CD8-positive, alpha-beta T cell (primary cell): ENCODE measurements at regions of chr14 and their contacts with region 1.

Region 1: GRCh38 chr14:67695394-67695949 is at the start of gene RDH11:
- DNase-seq: peak; percentile 51 to 93 (median 82)
- ATAC-seq: peak; percentile 95
- H3K4me3 ChIP-seq: peak within 1 kb of the TSS; percentile 78 to 86
- H3K4me3 Mint-ChIP-seq: peak within 1 kb of the TSS; percentile 88
- H3K27ac ChIP-seq: peak within 1 kb of the TSS; percentile 52 to 87
- H3K27ac Mint-ChIP-seq: peak within 1 kb of the TSS; percentile 92
- H3K4me1 ChIP-seq: peaks cover 11% of the 10 kb centered on the region
- H3K4me1 Mint-ChIP-seq: peaks cover 23% of the 10 kb centered on the region
- H3K27me3 ChIP-seq: no peaks in the 10 kb centered on the region
- H3K27me3 Mint-ChIP-seq: no peaks in the 10 kb centered on the region
- CTCF ChIP-seq: no peak
- total RNA-seq, gene RDH11: 13.9 to 14.5 TPM

Region 2: DNA sequence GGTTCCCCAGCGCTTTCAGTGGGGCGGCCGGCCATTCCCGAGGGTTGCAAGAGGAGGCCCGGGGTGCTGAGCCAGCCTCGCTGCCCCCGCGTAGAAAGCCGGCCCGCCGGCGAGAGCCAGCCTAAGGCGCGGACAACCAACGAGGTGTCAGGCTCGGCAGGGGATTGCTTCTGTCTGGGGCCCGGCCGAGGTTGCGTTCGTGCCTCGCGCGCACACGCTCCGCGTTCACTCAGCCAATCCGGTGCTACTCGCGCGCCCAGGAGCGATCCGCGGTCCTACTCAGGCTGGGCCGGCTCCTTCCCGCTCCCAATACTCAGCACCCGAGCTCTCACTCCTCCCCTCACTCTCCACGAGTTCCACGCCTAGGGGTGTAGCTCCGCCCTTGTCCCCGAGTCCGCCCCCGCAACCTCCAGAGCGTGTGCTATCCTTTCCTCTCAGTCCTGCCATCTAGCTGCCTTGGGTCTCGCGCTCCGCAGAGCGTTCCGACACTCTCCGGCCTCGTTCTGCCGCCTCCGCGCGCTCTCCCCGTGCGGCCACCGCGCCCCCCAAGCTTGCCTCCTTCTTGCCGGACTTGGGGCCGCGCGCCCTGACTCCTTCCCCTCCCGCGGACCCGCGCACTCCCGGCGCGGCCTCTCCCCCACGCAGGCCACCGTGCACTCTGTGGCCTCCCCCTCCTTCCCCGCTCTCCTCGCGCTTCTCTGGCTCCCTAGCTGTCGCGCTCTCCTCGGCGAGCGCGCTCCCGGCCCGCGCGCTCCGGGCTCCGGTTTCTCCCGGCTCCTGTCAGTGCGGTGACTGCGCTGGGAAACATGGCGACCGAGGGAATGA is 1187.5 kb before region 1 on chr14 and contains the start of gene GPHN:
- CTCF ChIA-PET with region 1: no interaction called
- POLR2A ChIA-PET with region 1: no interaction called
- intact Hi-C with region 1: loop called in 1 of 2 experiments (anchors 5 kb)
- DNase-seq: peak; percentile 53 to 91 (median 82)
- ATAC-seq: peak; percentile 90
- H3K4me3 ChIP-seq: peak within 1 kb of the TSS; percentile 75 to 81
- H3K4me3 Mint-ChIP-seq: peak within 1 kb of the TSS; percentile 99
- H3K27ac ChIP-seq: peak within 1 kb of the TSS; percentile 55 to 67
- H3K27ac Mint-ChIP-seq: peak within 1 kb of the TSS; percentile 91
- H3K4me1 ChIP-seq: no peaks in the 10 kb centered on the region
- H3K4me1 Mint-ChIP-seq: peaks cover 35% of the 10 kb centered on the region
- H3K27me3 ChIP-seq: no peaks in the 10 kb centered on the region
- H3K27me3 Mint-ChIP-seq: no peaks in the 10 kb centered on the region
- CTCF ChIP-seq: no peak
- total RNA-seq, gene GPHN: 8.2 to 9.3 TPM

Region 3: DNA sequence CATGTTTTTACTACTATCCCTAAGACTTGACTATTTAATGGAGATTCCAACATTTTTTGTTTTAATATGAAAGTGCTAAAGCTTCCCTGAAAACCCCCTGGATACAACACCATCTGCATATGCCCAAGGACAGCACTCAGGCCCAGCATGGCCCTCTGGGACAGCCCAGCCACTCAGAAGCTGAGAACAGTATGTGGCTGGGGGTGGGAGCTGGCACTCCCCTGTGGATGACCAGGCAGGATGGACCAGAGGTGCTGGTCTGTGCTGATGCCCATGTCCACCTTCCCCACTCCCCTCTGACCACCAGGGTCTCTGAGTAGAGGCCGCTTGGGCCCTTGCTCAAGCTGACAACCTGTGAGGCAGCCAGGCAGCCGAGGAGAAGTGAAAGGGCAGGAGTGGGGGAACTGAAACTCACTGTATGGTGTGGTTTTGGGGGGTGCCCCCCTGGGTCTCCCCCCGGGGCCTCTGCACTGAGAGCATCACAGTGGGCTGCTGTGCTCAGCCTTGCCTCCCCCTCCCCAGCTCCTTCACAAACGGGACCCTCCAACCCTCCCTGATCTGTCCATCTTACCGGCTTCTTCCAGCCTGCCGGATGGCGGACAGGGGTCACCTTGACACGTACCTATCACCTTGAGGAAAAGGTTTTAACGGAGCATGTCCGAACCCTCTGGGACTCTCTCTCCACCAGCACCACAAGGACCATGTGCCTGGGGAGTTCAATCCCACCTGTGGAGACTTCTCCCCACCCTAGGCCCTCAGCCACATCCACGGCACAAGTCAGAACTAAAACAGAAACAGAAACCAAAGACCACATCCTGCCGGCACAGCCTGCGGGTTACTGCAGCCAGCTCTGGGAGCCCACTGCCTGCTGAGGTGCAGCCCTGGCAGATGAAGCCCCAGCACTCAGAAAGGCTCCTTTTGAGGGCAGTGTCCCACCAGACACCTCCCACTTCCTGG is 207.3 kb before region 1 on chr14 and contains the start of gene TMEM229B:
- CTCF ChIA-PET with region 1: no interaction called
- POLR2A ChIA-PET with region 1: no interaction called
- intact Hi-C with region 1: loop called in 1 of 2 experiments (anchors 5 kb)
- DNase-seq: peak; percentile 43 to 90 (median 77)
- ATAC-seq: peak; percentile 96
- H3K4me3 ChIP-seq: peak within 1 kb of the TSS; percentile 68 to 84
- H3K4me3 Mint-ChIP-seq: peak within 1 kb of the TSS; percentile 99
- H3K27ac ChIP-seq: peak within 1 kb of the TSS; percentile 92 to 93
- H3K27ac Mint-ChIP-seq: peak within 1 kb of the TSS; percentile 100
- H3K4me1 ChIP-seq: peaks cover 51% of the 10 kb centered on the region
- H3K4me1 Mint-ChIP-seq: peaks cover 79% of the 10 kb centered on the region
- H3K27me3 ChIP-seq: no peaks in the 10 kb centered on the region
- H3K27me3 Mint-ChIP-seq: no peaks in the 10 kb centered on the region
- CTCF ChIP-seq: no peak
- total RNA-seq, gene TMEM229B: 4.5 to 4.8 TPM

Region 4: GRCh38 chr14:67599698-67600561 is 95.5 kb before region 1 on chr14 and contains the start of gene PIGH:
- CTCF ChIA-PET with region 1: interaction called, 3 read pairs
- POLR2A ChIA-PET with region 1: interaction called, 13 read pairs
- intact Hi-C with region 1: loop called (anchors 1 to 2 kb)
- DNase-seq: peak; percentile 90 to 97 (median 94)
- ATAC-seq: peak; percentile 97
- H3K4me3 ChIP-seq: peak within 1 kb of the TSS; percentile 92 to 99
- H3K4me3 Mint-ChIP-seq: peak within 1 kb of the TSS; percentile 98
- H3K27ac ChIP-seq: peak within 1 kb of the TSS; percentile 74 to 87
- H3K27ac Mint-ChIP-seq: peak within 1 kb of the TSS; percentile 98
- H3K4me1 ChIP-seq: peaks cover 19% of the 10 kb centered on the region
- H3K4me1 Mint-ChIP-seq: peaks cover 49% of the 10 kb centered on the region
- H3K27me3 ChIP-seq: no peaks in the 10 kb centered on the region
- H3K27me3 Mint-ChIP-seq: no peaks in the 10 kb centered on the region
- CTCF ChIP-seq: peak; percentile 52
- total RNA-seq, gene PIGH: 66.0 to 67.8 TPM

Region 5: GRCh38 chr14:67674481-67675169 is 20.8 kb before region 1 on chr14 and contains the start of gene VTI1B:
- CTCF ChIA-PET with region 1: interaction called, 4 read pairs
- POLR2A ChIA-PET with region 1: interaction called, 5 read pairs
- intact Hi-C with region 1: loop called (anchors 1 kb)
- DNase-seq: peak; percentile 64 to 89 (median 79)
- ATAC-seq: peak; percentile 92
- H3K4me3 ChIP-seq: peak within 1 kb of the TSS; percentile 78 to 82
- H3K4me3 Mint-ChIP-seq: peak within 1 kb of the TSS; percentile 94
- H3K27ac ChIP-seq: peak within 1 kb of the TSS; percentile 93 to 95
- H3K27ac Mint-ChIP-seq: peak within 1 kb of the TSS; percentile 93
- H3K4me1 ChIP-seq: peaks cover 32% of the 10 kb centered on the region
- H3K4me1 Mint-ChIP-seq: peaks cover 39% of the 10 kb centered on the region
- H3K27me3 ChIP-seq: no peaks in the 10 kb centered on the region
- H3K27me3 Mint-ChIP-seq: no peaks in the 10 kb centered on the region
- CTCF ChIP-seq: no peak
- total RNA-seq, gene VTI1B: 27.6 to 31.1 TPM

Region 6: GRCh38 chr14:68307014-68307789 is 611.7 kb after region 1 on chr14:
- CTCF ChIA-PET with region 1: no interaction called
- POLR2A ChIA-PET with region 1: no interaction called
- intact Hi-C with region 1: no loop called
- DNase-seq: no peak
- ATAC-seq: no peak
- H3K4me3 ChIP-seq: no peak overlapping the region
- H3K4me3 Mint-ChIP-seq: no peak overlapping the region
- H3K27ac ChIP-seq: no peak overlapping the region
- H3K27ac Mint-ChIP-seq: no peak overlapping the region
- H3K4me1 ChIP-seq: no peaks in the 10 kb centered on the region
- H3K4me1 Mint-ChIP-seq: peaks cover 9% of the 10 kb centered on the region
- H3K27me3 ChIP-seq: no peaks in the 10 kb centered on the region
- H3K27me3 Mint-ChIP-seq: no peaks in the 10 kb centered on the region
- CTCF ChIP-seq: no peak